ENCODE measurements at regions of chr1 and their contacts with region 1.

Region 1: GRCh38 chr1:215606564-215607168 is 39.6 kb downstream of the KCTD3 start:
- DNase-seq: no peak
- H3K4me3 Mint-ChIP-seq: no peak overlapping the region
- H3K27ac Mint-ChIP-seq: peak overlapping the region; percentile 64
- H3K4me1 Mint-ChIP-seq: peaks cover 22% of the 10 kb centered on the region
- H3K27me3 Mint-ChIP-seq: no peaks in the 10 kb centered on the region
- CTCF ChIP-seq: peak; percentile 58

Region 2: GRCh38 chr1:215543191-215543606 is 63.5 kb before region 1 on chr1:
- CTCF ChIA-PET with region 1: no interaction called
- intact Hi-C with region 1: loop called (anchors 5 kb)
- DNase-seq: peak; percentile 71
- H3K4me3 Mint-ChIP-seq: peak overlapping the region; percentile 46
- H3K27ac Mint-ChIP-seq: peak overlapping the region; percentile 86
- H3K4me1 Mint-ChIP-seq: peaks cover 44% of the 10 kb centered on the region
- H3K27me3 Mint-ChIP-seq: no peaks in the 10 kb centered on the region
- CTCF ChIP-seq: no peak

Measured in Calu3 (cell line).